Activated T-helper 2 cell treated with anti-CD3 and anti-CD28 coated beads, Interferon-gamma antibody, Interleukin-2, Interleukin-4, amounts not matched to agents 10 μg/mL and 5 μg/mL and 100 μg/mL, durations not matched to agents 14 hours and 24 hours and 36 hours (primary cell): ENCODE measurements at regions of chr2 and their contacts with region 1.

Region 1: GRCh38 chr2:218959141-218959731 is at the start of gene CDK5R2:
- DNase-seq: peak; percentile 58
- H3K4me3 Mint-ChIP-seq: peak within 1 kb of the TSS; percentile 14
- H3K27ac Mint-ChIP-seq: no peak within 1 kb of the TSS
- H3K4me1 Mint-ChIP-seq: no peaks in the 10 kb centered on the region
- H3K27me3 Mint-ChIP-seq: peaks cover 72% of the 10 kb centered on the region
- total RNA-seq, gene CDK5R2: not detected in 2 replicates

Region 2: GRCh38 chr2:218908721-218909619 is 50.3 kb before region 1 on chr2:
- intact Hi-C with region 1: loop called (anchors 10 kb)
- DNase-seq: peak; percentile 83
- H3K4me3 Mint-ChIP-seq: peak overlapping the region; percentile 80
- H3K27ac Mint-ChIP-seq: peak overlapping the region; percentile 76
- H3K4me1 Mint-ChIP-seq: peaks cover 13% of the 10 kb centered on the region
- H3K27me3 Mint-ChIP-seq: peaks cover 23% of the 10 kb centered on the region